HCT116 (cell line): ENCODE measurements at regions of chr20 and their contacts with region 1.

Region 1: DNA sequence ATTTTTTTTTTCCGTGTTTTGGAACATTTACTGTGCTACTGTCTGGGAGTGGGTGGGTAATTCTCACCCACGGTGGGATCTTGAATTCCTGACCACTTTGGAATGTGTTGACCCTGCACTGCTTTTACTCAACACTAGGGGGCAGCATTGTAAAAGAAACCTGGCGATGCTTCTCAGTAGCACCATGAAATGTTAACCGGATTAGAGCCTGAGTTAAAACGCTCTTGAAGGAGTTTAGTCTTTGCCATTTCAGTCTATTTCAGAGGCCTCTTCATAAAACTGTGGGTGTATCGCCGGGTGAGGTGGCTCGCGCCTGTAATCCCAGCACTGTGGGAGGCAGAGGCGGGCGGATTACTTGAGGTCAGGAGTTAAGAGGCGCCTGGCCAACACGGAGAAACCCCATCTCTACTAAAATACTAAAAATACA is 114.4 kb upstream of the PRND start:
- DNase-seq: peak; percentile 51
- ATAC-seq: peak; percentile 91
- H3K4me3 ChIP-seq: no peak overlapping the region
- H3K27ac ChIP-seq: no peak overlapping the region
- H3K4me1 ChIP-seq: peaks cover under 1 to 9% of the 10 kb centered on the region in 2 experiments; a peak in 3 of 4 replicates
- H3K27me3 ChIP-seq: no peaks in the 10 kb centered on the region
- CTCF ChIP-seq: peak; percentile 82 to 96 (median 94)
- POLR2A ChIP-seq: no peak
- RAD21 ChIP-seq: peak; percentile 95

Region 2: GRCh38 chr20:4108495-4109306 is 498.6 kb before region 1 on chr20:
- CTCF ChIA-PET with region 1: no interaction called
- POLR2A ChIA-PET with region 1: no interaction called
- RAD21 ChIA-PET with region 1: no interaction called
- intact Hi-C with region 1: loop called (anchors 5 kb)
- DNase-seq: peak; percentile 83
- ATAC-seq: peak; percentile 94
- H3K4me3 ChIP-seq: no peak overlapping the region
- H3K27ac ChIP-seq: no peak overlapping the region; the same call in 1 of the 2 replicates
- H3K4me1 ChIP-seq: peaks cover 13 to 29% of the 10 kb centered on the region in 2 experiments; a peak in 3 of 4 replicates
- H3K27me3 ChIP-seq: no peaks in the 10 kb centered on the region
- CTCF ChIP-seq: peak; percentile 97 to 99 (median 98)
- POLR2A ChIP-seq: no peak
- RAD21 ChIP-seq: peak; percentile 100

Region 3: GRCh38 chr20:4720041-4720976 is 113.0 kb after region 1 on chr20:
- CTCF ChIA-PET with region 1: interaction called, 5 read pairs
- POLR2A ChIA-PET with region 1: no interaction called
- RAD21 ChIA-PET with region 1: interaction called in 1 of 2 experiments, 3 read pairs
- intact Hi-C with region 1: loop called (anchors 1 kb)
- DNase-seq: peak; percentile 57
- ATAC-seq: peak; percentile 90
- H3K4me3 ChIP-seq: no peak overlapping the region
- H3K27ac ChIP-seq: no peak overlapping the region
- H3K4me1 ChIP-seq: peaks cover 0 to 7% of the 10 kb centered on the region in 2 experiments; a peak in 1 of 4 replicates
- H3K27me3 ChIP-seq: no peaks in the 10 kb centered on the region
- CTCF ChIP-seq: peak; percentile 60 to 93 (median 74)
- POLR2A ChIP-seq: no peak
- RAD21 ChIP-seq: peak; percentile 97

Region 4: GRCh38 chr20:4956200-4956810 is 349.0 kb after region 1 on chr20:
- CTCF ChIA-PET with region 1: no interaction called
- POLR2A ChIA-PET with region 1: no interaction called
- RAD21 ChIA-PET with region 1: no interaction called
- intact Hi-C with region 1: loop called (anchors 5 kb)
- DNase-seq: peak; percentile 34
- ATAC-seq: peak; percentile 66
- H3K4me3 ChIP-seq: no peak overlapping the region
- H3K27ac ChIP-seq: no peak overlapping the region
- H3K4me1 ChIP-seq: peaks cover 12 to 30% of the 10 kb centered on the region in 2 experiments
- H3K27me3 ChIP-seq: no peaks in the 10 kb centered on the region
- CTCF ChIP-seq: peak; percentile 72 to 90 (median 74)
- POLR2A ChIP-seq: no peak
- RAD21 ChIP-seq: peak; percentile 81

Region 5: GRCh38 chr20:5100684-5101347 is 493.5 kb after region 1 on chr20:
- CTCF ChIA-PET with region 1: interaction called, 5 read pairs
- POLR2A ChIA-PET with region 1: no interaction called
- RAD21 ChIA-PET with region 1: no interaction called
- intact Hi-C with region 1: loop called (anchors 1 kb)
- DNase-seq: peak; percentile 39
- ATAC-seq: peak; percentile 94
- H3K4me3 ChIP-seq: no peak overlapping the region
- H3K27ac ChIP-seq: peak overlapping the region; percentile 41; the same call in 1 of the 2 replicates
- H3K4me1 ChIP-seq: no peaks in the 10 kb centered on the region
- H3K27me3 ChIP-seq: no peaks in the 10 kb centered on the region
- CTCF ChIP-seq: peak; percentile 71 to 87 (median 73)
- POLR2A ChIP-seq: no peak
- RAD21 ChIP-seq: peak; percentile 85

Region 6: DNA sequence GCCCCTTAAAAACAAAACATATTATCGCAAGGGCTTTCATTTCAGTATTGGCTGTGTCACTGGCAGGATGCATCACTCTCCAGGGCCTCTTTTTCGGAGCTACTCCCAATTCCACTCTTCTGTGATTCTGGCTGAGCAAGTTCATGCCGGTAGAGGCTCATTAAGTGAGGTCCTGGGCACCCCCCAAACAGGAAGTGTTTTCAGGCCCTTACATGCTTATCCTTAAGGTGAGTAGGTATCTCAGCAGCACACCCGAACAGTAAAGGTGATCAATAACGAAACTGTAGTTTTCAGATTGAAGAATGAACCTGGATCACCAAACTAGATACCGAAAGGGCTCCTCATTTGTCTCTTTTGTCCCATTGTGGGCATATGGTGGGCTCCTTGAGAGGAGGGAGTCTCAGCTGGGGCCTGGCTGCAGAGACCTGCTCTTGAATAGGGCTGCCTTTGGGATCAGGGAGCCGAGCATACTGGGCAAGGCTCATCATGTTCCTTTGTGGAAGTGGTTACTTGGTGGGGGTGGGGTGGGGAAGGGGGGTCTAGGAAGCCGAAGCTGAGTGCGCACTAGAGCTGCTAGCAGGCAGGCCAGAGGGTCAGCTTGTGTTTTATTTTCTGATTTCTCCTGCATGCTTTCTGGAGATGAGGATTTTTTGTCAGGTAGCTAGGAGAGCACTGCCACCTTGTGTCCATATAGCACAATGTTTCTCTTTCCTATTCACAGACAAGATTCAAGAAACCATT is 584.7 kb after region 1 on chr20:
- CTCF ChIA-PET with region 1: no interaction called
- POLR2A ChIA-PET with region 1: no interaction called
- RAD21 ChIA-PET with region 1: no interaction called
- intact Hi-C with region 1: loop called (anchors 5 kb)
- DNase-seq: peak; percentile 51
- ATAC-seq: peak; percentile 82
- H3K4me3 ChIP-seq: no peak overlapping the region
- H3K27ac ChIP-seq: peak overlapping the region; percentile 15; the same call in 1 of the 2 replicates
- H3K4me1 ChIP-seq: no peaks in the 10 kb centered on the region
- H3K27me3 ChIP-seq: no peaks in the 10 kb centered on the region
- CTCF ChIP-seq: peak; percentile 66 to 85 (median 74)
- POLR2A ChIP-seq: no peak
- RAD21 ChIP-seq: peak; percentile 93